ENCODE measurements at regions of chr1 and their contacts with region 1.

Region 1: DNA sequence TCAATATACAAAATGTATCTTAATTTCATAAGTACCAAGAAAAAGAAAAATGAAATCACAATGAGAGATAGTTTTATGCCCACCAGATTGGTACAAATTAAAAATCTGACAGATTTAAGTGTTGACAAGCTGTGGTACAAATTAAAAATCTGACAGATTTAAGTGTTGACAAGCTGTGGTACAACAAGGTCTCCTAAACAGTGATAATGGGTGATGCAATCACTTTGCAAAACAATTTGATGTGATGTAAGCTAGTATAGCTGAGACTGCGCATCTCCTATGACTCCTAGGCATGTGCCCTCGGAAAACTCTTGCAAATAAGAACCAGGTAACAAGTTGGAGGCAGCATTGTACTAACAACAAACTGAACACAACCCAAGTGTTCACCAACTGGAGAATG is 100.6 kb downstream of the LPAR3 start:
- DNase-seq: no peak
- H3K4me3 Mint-ChIP-seq: no peak overlapping the region
- H3K27ac Mint-ChIP-seq: no peak overlapping the region
- H3K4me1 Mint-ChIP-seq: no peaks in the 10 kb centered on the region
- H3K27me3 Mint-ChIP-seq: peaks cover 16% of the 10 kb centered on the region

Region 2: DNA sequence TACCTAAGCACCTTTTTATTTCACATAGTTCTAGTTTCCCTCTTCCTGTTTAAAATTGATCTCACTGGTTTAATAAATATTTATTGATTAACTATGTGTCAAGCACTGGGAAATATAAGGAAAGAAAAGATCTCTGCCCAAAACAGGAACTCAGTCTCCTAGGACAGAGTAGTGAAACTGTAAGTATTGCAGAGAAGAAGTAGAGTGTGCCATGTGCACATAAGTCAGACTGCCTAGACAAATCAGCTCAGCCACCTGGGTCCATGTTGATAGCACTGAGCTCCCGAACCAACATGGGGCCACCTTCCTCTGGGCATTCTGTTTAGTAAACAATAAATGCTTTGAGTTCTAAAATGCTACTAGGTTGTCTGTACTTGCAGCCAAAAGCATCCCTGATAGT is 92.4 kb before region 1 on chr1:
- CTCF ChIA-PET with region 1: no interaction called
- DNase-seq: no peak
- H3K4me3 Mint-ChIP-seq: no peak overlapping the region
- H3K27ac Mint-ChIP-seq: no peak overlapping the region
- H3K4me1 Mint-ChIP-seq: no peaks in the 10 kb centered on the region
- H3K27me3 Mint-ChIP-seq: peaks cover 13% of the 10 kb centered on the region

Region 3: GRCh38 chr1:84781946-84782771 is 10.3 kb before region 1 on chr1:
- CTCF ChIA-PET with region 1: interaction called, 12 read pairs
- DNase-seq: peak; percentile 84
- H3K4me3 Mint-ChIP-seq: peak overlapping the region; percentile 65
- H3K27ac Mint-ChIP-seq: no peak overlapping the region
- H3K4me1 Mint-ChIP-seq: peaks cover 33% of the 10 kb centered on the region
- H3K27me3 Mint-ChIP-seq: peaks cover 9% of the 10 kb centered on the region

Measured in activated naive CD4-positive, alpha-beta T cell treated with anti-CD3 and anti-CD28 coated beads, Interleukin-2, amount 10 ng/mL, durations not matched to agents 7 days and 5 days (primary cell).